Gastrocnemius medialis (tissue), 4 donors: ENCODE measurements at regions of chr5 and their contacts with region 1.

Region 1: DNA sequence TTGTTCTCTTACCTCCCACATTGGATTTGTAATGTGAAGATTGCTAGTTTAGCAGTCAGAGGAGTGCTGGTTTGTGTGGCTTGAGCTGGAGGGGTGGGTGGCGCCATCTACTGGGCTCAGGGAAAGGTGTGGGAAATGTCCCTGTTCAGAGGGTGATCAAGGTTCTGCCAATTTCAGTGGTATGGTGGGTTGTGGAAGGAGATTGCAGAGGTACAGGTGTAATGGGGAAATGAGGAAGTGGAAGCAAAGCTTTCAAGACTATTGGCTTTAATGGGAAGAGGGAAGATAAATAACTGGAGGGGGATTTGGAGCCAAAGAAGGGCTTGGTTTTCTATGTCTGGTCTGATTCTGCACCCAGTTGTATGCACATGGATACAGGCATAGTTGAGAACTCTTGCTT is 76.4 kb downstream of the OSMR start:
- DNase-seq: no peak
- ATAC-seq: no peak
- H3K4me3 ChIP-seq: no peak overlapping the region
- H3K27ac ChIP-seq: no peak overlapping the region
- H3K4me1 ChIP-seq: no peaks in the 10 kb centered on the region
- H3K27me3 ChIP-seq: no peaks in the 10 kb centered on the region
- CTCF ChIP-seq: peak in 4 of 5 experiments; percentile 29 to 68 (median 62)
- POLR2A ChIP-seq: no peak

Region 2: GRCh38 chr5:38420691-38421390 is 501.4 kb before region 1 on chr5:
- in situ Hi-C with region 1: no loop called
- intact Hi-C with region 1: loop called (anchors 10 kb)
- DNase-seq: peak; percentile 7 to 44
- ATAC-seq: peak; percentile 81 to 83
- H3K4me3 ChIP-seq: no peak overlapping the region
- H3K27ac ChIP-seq: no peak overlapping the region
- H3K4me1 ChIP-seq: no peaks in the 10 kb centered on the region
- H3K27me3 ChIP-seq: no peaks in the 10 kb centered on the region
- CTCF ChIP-seq: peak; percentile 49 to 75 (median 68)
- POLR2A ChIP-seq: no peak

Region 3: DNA sequence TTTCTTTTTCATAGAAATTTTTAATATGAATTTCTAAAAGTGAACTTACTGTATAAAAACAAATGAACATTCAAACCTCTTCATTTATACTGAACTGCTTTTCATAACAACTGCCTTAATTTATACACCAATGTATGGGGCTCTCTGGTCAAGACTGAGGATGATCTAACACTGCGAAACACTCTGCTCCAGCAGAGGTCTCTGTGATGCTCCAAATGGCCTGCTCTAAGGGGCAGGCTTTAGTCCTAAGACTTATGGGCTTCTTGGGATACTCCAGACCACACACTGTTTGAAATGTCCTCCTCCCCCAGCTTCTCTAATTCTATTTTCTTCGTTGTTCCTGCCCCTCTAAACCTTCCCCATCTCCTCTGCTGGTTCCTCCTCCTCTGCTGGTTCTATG is 424.3 kb before region 1 on chr5:
- in situ Hi-C with region 1: loop called in 1 of 4 experiments (anchors 25 kb)
- intact Hi-C with region 1: no loop called
- DNase-seq: no peak
- ATAC-seq: peak in 1 of 2 donors; percentile 55
- H3K4me3 ChIP-seq: no peak overlapping the region
- H3K27ac ChIP-seq: no peak overlapping the region
- H3K4me1 ChIP-seq: no peaks in the 10 kb centered on the region
- H3K27me3 ChIP-seq: no peaks in the 10 kb centered on the region
- CTCF ChIP-seq: no peak
- POLR2A ChIP-seq: no peak

Region 4: GRCh38 chr5:38831909-38832308 is 90.3 kb before region 1 on chr5:
- in situ Hi-C with region 1: loop called in 1 of 4 experiments (anchors 5 kb)
- intact Hi-C with region 1: loop called (anchors 5 kb)
- DNase-seq: no peak
- ATAC-seq: peak in 1 of 2 donors; percentile 21
- H3K4me3 ChIP-seq: no peak overlapping the region
- H3K27ac ChIP-seq: no peak overlapping the region
- H3K4me1 ChIP-seq: no peaks in the 10 kb centered on the region
- H3K27me3 ChIP-seq: no peaks in the 10 kb centered on the region
- CTCF ChIP-seq: peak in 2 of 5 experiments; percentile 33 to 50
- POLR2A ChIP-seq: no peak

Region 5: GRCh38 chr5:38845526-38846378 is 76.4 kb before region 1 on chr5 and contains the start of gene OSMR:
- in situ Hi-C with region 1: no loop called
- intact Hi-C with region 1: no loop called
- DNase-seq: peak; percentile 67 to 79
- ATAC-seq: peak; percentile 84 to 85
- H3K4me3 ChIP-seq: peak within 1 kb of the TSS; percentile 66 to 80 (median 70)
- H3K27ac ChIP-seq: peak within 1 kb of the TSS; percentile 74 to 89 (median 86)
- H3K4me1 ChIP-seq: no peaks in the 10 kb centered on the region
- H3K27me3 ChIP-seq: peaks cover 4 to 9% (median 7%) of the 10 kb centered on the region in 3 donors
- CTCF ChIP-seq: no peak
- POLR2A ChIP-seq: peak; percentile 73 to 77
- total RNA-seq, gene OSMR: 4.9 to 12.4 (median 6.5) TPM

Region 6: GRCh38 chr5:38858839-38859238 is 63.4 kb before region 1 on chr5:
- in situ Hi-C with region 1: no loop called
- intact Hi-C with region 1: no loop called
- DNase-seq: no peak
- ATAC-seq: no peak
- H3K4me3 ChIP-seq: no peak overlapping the region
- H3K27ac ChIP-seq: no peak overlapping the region
- H3K4me1 ChIP-seq: no peaks in the 10 kb centered on the region
- H3K27me3 ChIP-seq: no peaks in the 10 kb centered on the region
- CTCF ChIP-seq: no peak
- POLR2A ChIP-seq: no peak

Region 7: GRCh38 chr5:39100851-39101396 is 178.7 kb after region 1 on chr5:
- in situ Hi-C with region 1: no loop called
- intact Hi-C with region 1: no loop called
- DNase-seq: no peak
- ATAC-seq: no peak
- H3K4me3 ChIP-seq: no peak overlapping the region
- H3K27ac ChIP-seq: no peak overlapping the region
- H3K4me1 ChIP-seq: no peaks in the 10 kb centered on the region
- H3K27me3 ChIP-seq: no peaks in the 10 kb centered on the region
- CTCF ChIP-seq: no peak
- POLR2A ChIP-seq: no peak